PC-9 (cell line): ENCODE measurements at regions of chr20 and their contacts with region 1.

Region 1: DNA sequence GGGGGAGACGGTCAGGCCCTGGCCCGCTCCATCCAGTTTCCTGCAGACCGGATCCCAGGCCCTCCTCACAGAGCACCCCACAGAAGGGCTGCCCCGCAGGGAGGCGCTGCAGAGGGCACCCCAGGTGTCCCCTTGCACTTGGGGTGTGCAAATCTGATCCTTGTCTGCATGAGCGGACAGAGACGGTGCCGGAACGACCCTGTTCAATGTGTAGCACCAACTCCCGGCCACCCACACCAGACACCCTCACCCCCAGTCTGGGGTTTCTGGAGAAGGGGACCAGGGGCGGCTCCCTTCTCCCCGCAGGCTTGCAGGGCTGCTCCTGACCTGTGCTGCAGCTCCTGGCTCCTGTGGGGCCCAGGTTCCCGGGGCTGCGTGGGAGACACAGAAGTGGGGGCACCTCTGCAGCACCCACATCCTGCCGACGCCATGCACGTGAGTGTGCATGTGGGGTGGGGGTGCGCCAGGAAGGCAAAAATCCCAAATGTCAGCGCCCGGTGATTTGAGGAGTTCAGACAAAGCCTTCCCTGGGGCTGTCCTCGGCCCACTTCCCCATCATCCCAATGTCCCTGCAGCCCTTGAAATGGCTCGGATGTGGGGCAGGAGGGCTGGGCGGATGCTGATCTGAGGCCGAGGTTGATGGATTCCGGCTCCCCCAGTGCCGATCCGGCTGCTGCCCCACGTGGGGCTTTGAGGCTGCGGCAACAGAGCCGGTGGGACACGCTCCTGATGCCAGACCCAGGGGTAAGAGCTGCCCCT is 85.3 kb upstream of the BHLHE23 start:
- DNase-seq: no peak
- H3K4me3 ChIP-seq: no peak overlapping the region
- H3K27ac ChIP-seq: no peak overlapping the region
- H3K4me1 ChIP-seq: 0 out of 2 replicates have a peak, but pooled peaks cover 10% of the 10 kb centered on the region
- H3K27me3 ChIP-seq: peaks cover 88% of the 10 kb centered on the region
- CTCF ChIP-seq: no peak

Region 2: DNA sequence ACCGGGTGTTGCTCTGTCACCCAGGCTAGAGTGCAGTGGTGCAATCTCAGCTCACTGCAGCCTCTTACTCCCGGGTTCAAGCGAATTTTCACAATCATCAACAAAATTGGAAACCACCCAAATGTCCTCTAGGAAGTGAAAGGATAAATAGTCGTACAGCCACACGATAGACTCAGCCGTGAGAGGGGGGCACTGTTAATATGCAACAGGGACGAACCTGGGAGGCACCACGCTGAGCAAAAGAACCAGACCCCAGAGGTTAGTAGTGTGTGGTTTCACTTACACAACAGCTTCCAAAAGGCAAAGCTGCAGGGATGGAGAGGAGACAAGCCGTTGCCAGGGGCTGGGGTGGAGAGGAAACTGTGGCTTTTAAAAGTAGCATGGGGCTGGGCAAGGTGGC is 413.5 kb before region 1 on chr20:
- CTCF ChIA-PET with region 1: no interaction called
- POLR2A ChIA-PET with region 1: interaction called, 16 read pairs
- intact Hi-C with region 1: no loop called
- DNase-seq: no peak
- H3K4me3 ChIP-seq: no peak overlapping the region
- H3K27ac ChIP-seq: no peak overlapping the region
- H3K4me1 ChIP-seq: peaks cover 13% of the 10 kb centered on the region
- H3K27me3 ChIP-seq: no peaks in the 10 kb centered on the region
- CTCF ChIP-seq: no peak

Region 3: GRCh38 chr20:63002511-63002910 is 89.6 kb before region 1 on chr20:
- CTCF ChIA-PET with region 1: no interaction called
- POLR2A ChIA-PET with region 1: interaction called, 18 read pairs
- intact Hi-C with region 1: no loop called
- DNase-seq: no peak
- H3K4me3 ChIP-seq: no peak overlapping the region
- H3K27ac ChIP-seq: no peak overlapping the region
- H3K4me1 ChIP-seq: no peaks in the 10 kb centered on the region
- H3K27me3 ChIP-seq: peaks cover 54% of the 10 kb centered on the region
- CTCF ChIP-seq: no peak

Region 4: DNA sequence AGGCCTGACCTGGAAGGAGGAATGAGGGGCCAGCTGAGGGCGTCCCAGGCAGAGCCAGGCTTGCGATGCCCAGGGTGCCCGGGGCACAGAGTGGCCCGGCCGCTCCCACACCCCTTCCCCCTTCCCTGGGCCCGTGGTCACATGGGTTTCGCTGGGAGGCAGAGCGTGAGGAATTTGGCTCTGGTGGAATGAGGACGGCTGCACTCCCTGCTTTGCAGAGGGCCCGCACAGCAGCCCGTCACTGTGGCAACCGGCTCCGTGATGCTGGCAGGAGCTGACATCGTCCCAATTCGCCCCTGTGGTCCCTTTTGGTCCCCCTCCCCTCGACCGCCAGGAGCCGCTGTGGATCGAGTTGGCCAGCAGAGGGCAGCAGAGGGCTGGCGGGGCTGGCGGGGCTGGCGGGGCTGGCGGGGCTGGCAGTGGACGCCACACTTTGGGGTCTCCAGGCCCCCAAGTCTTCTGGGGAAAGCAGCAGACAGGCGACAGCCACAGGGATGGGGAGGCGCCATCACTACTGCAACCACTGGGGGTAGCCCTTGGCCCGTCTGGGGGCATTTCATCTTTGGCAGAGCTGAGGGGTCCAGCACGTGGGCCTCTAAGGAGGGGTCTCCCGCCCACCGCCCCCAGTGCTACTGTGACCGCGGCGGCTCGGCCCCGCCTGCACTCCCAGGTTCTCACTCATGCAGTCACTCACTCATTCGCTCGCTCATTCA is 35.7 kb before region 1 on chr20:
- CTCF ChIA-PET with region 1: no interaction called
- POLR2A ChIA-PET with region 1: no interaction called
- intact Hi-C with region 1: no loop called
- DNase-seq: peak in 1 of 2 experiments; percentile 21
- H3K4me3 ChIP-seq: no peak overlapping the region
- H3K27ac ChIP-seq: no peak overlapping the region
- H3K4me1 ChIP-seq: no peaks in the 10 kb centered on the region
- H3K27me3 ChIP-seq: peaks cover 96% of the 10 kb centered on the region
- CTCF ChIP-seq: peak; percentile 96